A549 (cell line): ENCODE measurements at regions of chr11 and their contacts with region 1.

Region 1: DNA sequence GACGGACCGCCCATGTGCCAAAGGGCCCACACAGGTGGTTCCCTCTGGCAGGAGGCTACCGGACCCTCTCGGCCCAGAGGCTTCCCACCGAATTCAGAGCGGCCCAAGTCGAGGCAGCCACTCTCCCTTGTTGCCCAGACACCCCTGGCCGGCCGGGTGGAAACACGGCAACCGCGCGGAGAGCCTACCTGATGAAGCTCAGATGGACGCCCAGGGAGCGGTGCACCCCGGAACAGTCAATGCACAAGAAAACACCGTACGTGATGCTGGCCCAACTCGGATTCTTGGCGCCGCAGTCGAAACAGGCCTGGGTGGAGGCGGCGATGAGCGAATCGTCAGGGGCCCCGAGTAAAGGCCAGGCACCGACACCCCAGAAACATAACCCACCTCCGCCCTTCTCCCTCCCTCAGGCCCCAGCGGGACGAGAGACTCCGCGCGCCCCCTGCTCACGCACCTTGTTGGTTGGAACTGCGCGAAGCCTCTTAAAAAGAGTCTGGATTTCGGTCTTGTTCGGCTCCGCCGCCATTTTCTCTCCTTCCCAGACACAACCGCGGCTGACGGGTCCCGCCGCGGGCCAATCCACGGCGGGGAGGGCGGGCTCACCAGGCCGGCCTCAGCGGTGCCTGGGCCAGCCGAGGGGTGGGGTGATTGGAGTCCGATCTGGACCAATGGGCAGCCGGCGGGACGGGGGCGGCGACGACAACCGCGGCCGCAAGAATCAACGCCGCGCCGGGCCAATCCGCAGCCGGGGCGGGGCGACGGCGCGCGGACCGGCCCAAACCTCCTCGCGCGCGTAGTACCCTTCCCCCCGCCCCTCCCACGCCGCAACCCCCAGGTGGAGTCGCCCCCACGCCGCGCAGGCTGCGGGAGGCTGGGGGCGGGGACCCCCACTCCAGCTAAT is at the start of gene ARFGAP2:
- DNase-seq: peak; percentile 95 to 99
- ATAC-seq: peak; percentile 86 to 96
- H3K4me3 ChIP-seq: peak within 1 kb of the TSS; percentile 100
- H3K27ac ChIP-seq: peak within 1 kb of the TSS; percentile 94 to 100
- H3K4me1 ChIP-seq: peaks cover 14% of the 10 kb centered on the region
- CTCF ChIP-seq: no peak
- EP300 ChIP-seq: no peak
- POLR2A ChIP-seq: peak; percentile 29; the same call in 1 of the 2 replicates
- RAD21 ChIP-seq: no peak
- polyA plus RNA-seq, gene ARFGAP2: 28.3 and 29.5 TPM in 2 replicates

Region 2: DNA sequence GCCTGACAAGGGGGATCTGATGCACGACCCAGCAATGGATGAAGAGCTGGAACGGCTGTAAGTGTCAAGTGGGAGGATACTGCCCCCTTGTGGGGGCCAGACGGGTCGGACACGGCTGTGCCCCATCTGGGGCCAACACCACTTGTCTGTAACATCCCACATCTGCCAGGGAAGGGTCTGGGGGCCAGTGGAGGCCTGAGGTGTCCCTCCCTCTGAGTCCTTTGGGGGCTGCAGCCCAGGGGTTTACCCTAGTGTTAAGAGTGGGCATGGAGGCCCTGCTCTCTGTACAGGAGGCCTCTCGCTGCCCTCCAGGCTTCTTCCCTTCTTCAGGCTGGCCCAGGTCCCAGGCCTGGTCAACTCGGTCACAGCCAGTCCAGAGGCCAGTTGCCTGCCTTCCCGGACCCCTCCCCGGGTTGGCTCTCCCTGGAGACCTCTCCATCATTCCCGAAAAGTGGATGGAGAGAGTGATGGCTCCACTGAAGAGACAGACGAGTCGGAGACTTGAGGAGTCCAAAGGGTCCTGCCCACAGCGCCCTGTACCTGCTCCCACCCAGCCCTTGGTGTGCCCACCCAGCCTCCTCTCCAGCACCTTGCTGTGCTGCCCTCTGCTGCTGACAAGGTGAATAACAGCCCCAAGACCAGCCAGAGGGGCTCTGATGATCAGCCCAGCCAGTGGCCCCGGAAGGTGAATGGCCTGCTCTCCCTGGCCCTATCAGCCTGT is 15.3 kb before region 1 on chr11:
- CTCF ChIA-PET with region 1: interaction called, 40 read pairs
- POLR2A ChIA-PET with region 1: no interaction called
- DNase-seq: peak; percentile 75 to 92
- ATAC-seq: peak; percentile 79 to 90
- H3K4me3 ChIP-seq: no peak overlapping the region
- H3K27ac ChIP-seq: no peak overlapping the region
- H3K4me1 ChIP-seq: no peaks in the 10 kb centered on the region
- CTCF ChIP-seq: peak; percentile 76
- EP300 ChIP-seq: no peak
- POLR2A ChIP-seq: no peak
- RAD21 ChIP-seq: peak; percentile 66 to 68

Region 3: DNA sequence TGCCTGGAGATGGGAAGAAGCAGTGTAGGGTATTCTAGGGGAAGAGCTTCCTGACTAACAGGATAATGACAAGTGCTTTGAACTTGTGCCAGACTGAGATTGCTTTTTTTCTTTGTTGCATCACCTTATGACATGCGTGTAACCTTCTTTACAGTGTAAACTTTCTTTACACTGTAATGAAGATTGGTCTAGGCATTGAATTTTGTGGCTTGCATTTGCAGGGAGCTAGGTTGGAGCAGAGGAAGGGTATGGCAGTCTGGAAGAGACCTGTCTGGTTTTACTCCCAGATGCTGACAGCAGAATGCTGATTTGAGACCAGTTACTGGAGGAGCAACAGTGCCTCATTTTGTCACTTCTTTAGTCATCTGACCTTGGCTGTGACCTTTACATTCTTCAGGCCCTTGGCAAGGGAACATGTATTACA is 43.8 kb after region 1 on chr11:
- CTCF ChIA-PET with region 1: interaction called, 40 read pairs
- POLR2A ChIA-PET with region 1: interaction called, 23 read pairs
- DNase-seq: no peak
- ATAC-seq: no peak
- H3K4me3 ChIP-seq: no peak overlapping the region
- H3K27ac ChIP-seq: peak overlapping the region in 1 of 2 experiments; percentile 73; a peak in 3 of 6 replicates
- H3K4me1 ChIP-seq: peaks cover 45% of the 10 kb centered on the region
- CTCF ChIP-seq: no peak
- EP300 ChIP-seq: no peak
- POLR2A ChIP-seq: no peak
- RAD21 ChIP-seq: no peak

Region 4: DNA sequence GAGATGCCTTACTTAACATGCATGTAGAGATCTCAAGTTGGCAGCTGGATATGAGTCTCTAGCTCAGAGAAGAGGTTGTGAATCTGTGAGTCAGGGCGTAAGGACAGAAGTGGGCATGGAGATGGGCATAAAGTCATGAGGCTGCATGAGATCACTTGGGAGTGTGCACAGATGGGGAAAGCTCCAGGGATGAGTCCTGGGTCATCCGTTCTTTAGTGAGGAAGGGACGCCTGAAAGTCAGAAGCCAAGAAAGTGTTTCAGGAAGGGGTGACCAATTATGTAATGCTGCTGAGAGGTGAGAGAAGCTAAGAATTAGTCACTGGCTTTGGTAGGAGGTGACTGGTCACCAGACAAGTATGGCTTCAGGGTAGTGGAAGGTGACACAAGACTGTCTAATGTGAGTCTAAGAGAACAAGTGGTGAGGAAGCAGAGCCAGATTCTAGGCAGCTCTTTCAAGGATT is 65.3 kb after region 1 on chr11:
- CTCF ChIA-PET with region 1: interaction called, 47 read pairs
- POLR2A ChIA-PET with region 1: no interaction called
- DNase-seq: no peak
- ATAC-seq: peak; percentile 17 to 28; a peak in 5 of 6 replicates
- H3K4me3 ChIP-seq: no peak overlapping the region
- H3K27ac ChIP-seq: peak overlapping the region in 1 of 2 experiments; percentile 4; a peak in 1 of 6 replicates
- H3K4me1 ChIP-seq: peaks cover 31% of the 10 kb centered on the region
- CTCF ChIP-seq: no peak
- EP300 ChIP-seq: no peak
- POLR2A ChIP-seq: no peak
- RAD21 ChIP-seq: no peak

Region 5: DNA sequence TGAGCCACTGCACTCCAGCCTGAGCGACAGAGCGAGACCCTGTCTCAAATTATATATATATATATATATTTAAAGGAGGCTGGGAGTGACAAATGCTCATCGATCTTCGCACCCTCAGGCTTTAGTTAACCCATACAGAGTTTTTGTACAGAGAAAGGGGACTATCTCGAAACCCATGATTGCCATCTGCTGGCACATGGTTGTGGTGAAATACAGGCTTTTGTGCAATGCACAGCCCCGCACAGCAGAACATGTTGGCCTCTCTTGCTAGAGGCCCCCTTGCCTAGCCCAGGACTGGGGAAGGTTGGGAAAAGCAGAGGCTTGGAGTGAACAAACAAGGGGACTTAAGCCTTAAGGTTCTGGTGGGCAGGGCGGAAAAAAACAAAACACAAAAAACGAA is 172.3 kb after region 1 on chr11:
- CTCF ChIA-PET with region 1: interaction called, 26 read pairs
- POLR2A ChIA-PET with region 1: no interaction called
- DNase-seq: peak; percentile 50 to 63
- ATAC-seq: peak; percentile 44 to 77; a peak in 3 of 6 replicates
- H3K4me3 ChIP-seq: no peak overlapping the region
- H3K27ac ChIP-seq: no peak overlapping the region
- H3K4me1 ChIP-seq: no peaks in the 10 kb centered on the region
- CTCF ChIP-seq: peak; percentile 33
- EP300 ChIP-seq: no peak
- POLR2A ChIP-seq: no peak
- RAD21 ChIP-seq: peak; percentile 50 to 69; a peak in 4 of 5 replicates